CD4-positive, alpha-beta memory T cell (primary cell): ENCODE measurements at regions of chr14 and their contacts with region 1.

Region 1: DNA sequence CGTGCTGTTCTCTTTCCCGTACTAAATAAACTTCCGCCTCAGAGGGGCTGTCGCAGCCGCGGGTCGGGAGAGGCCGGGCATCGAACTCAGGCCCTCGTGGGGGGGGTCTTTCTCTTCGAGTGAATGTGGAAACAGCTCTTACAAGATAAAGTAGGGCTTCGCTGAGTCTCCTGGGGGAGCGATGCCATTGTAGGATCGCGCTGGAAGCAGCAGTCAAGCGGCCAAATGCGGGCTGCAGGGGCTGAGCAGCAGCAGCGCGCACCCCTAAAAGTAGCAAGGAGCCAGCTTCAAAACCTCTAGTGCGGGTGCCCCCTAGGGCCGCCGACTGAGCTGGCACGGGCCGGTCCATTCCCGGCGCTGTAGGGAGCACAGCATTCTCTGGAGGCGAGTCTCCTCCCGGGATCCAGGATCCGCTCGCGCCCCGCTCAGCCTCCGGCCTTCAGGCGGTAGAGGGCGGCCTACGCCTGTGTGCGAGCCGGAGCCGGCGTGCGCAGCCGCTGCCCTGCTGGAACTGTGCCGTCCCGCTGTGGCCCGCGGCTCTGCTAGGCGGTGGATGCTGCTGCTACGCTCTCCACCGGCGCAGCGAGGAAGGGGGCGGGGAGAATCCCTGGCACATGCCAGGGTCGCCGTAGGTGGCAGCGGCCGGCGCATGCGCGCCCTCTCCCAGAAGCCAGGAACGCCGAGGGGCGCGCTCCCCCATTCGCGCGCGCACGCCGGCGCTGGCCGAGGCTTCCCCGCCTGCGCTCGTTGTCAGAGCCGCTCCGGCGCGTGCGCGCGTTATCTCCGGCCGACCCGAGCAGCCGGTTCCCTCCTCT is at the start of gene FUT8:
- DNase-seq: peak; percentile 91 to 97 (median 95)
- H3K4me3 ChIP-seq: peak within 1 kb of the TSS; percentile 93 to 97
- H3K4me3 Mint-ChIP-seq: peak within 1 kb of the TSS; percentile 97 to 100 (median 99)
- H3K27ac ChIP-seq: peak within 1 kb of the TSS; percentile 79
- H3K27ac Mint-ChIP-seq: peak within 1 kb of the TSS; percentile 80 to 99 (median 98)
- H3K4me1 ChIP-seq: peaks cover 35% of the 10 kb centered on the region
- H3K4me1 Mint-ChIP-seq: peaks cover 27 to 45% (median 35%) of the 10 kb centered on the region in 4 donors
- H3K27me3 ChIP-seq: no peaks in the 10 kb centered on the region
- H3K27me3 Mint-ChIP-seq: no peaks in the 10 kb centered on the region
- total RNA-seq, gene FUT8: 49.3 to 51.0 TPM

Region 2: GRCh38 chr14:64986578-64987571 is 425.4 kb before region 1 on chr14 and contains the start of gene FNTB:
- CTCF ChIA-PET with region 1: interaction called, 5 read pairs
- POLR2A ChIA-PET with region 1: interaction called, 9 read pairs
- intact Hi-C with region 1: loop called (anchors 1 kb)
- DNase-seq: peak; percentile 93 to 96 (median 96)
- H3K4me3 ChIP-seq: peak within 1 kb of the TSS; percentile 57 to 98
- H3K4me3 Mint-ChIP-seq: peak within 1 kb of the TSS; percentile 92 to 100 (median 98)
- H3K27ac ChIP-seq: peak within 1 kb of the TSS; percentile 70
- H3K27ac Mint-ChIP-seq: peak within 1 kb of the TSS; percentile 89 to 100 (median 98)
- H3K4me1 ChIP-seq: peaks cover 48% of the 10 kb centered on the region
- H3K4me1 Mint-ChIP-seq: peaks cover 29 to 66% (median 45%) of the 10 kb centered on the region in 4 donors
- H3K27me3 ChIP-seq: no peaks in the 10 kb centered on the region
- H3K27me3 Mint-ChIP-seq: peaks cover 2 to 9% of the 10 kb centered on the region in 2 donors
- total RNA-seq, gene FNTB: 12.1 to 13.6 TPM

Region 3: GRCh38 chr14:65200454-65200853 is 211.8 kb before region 1 on chr14:
- CTCF ChIA-PET with region 1: interaction called, 3 read pairs
- POLR2A ChIA-PET with region 1: interaction called, 67 read pairs
- intact Hi-C with region 1: no loop called
- DNase-seq: no peak
- H3K4me3 ChIP-seq: no peak overlapping the region
- H3K4me3 Mint-ChIP-seq: no peak overlapping the region
- H3K27ac ChIP-seq: no peak overlapping the region
- H3K27ac Mint-ChIP-seq: peak overlapping the region in 1 of 7 donors; percentile 64
- H3K4me1 ChIP-seq: peaks cover 17% of the 10 kb centered on the region
- H3K4me1 Mint-ChIP-seq: peaks cover 13 to 25% (median 16%) of the 10 kb centered on the region in 4 donors
- H3K27me3 ChIP-seq: no peaks in the 10 kb centered on the region
- H3K27me3 Mint-ChIP-seq: no peaks in the 10 kb centered on the region

Region 4: DNA sequence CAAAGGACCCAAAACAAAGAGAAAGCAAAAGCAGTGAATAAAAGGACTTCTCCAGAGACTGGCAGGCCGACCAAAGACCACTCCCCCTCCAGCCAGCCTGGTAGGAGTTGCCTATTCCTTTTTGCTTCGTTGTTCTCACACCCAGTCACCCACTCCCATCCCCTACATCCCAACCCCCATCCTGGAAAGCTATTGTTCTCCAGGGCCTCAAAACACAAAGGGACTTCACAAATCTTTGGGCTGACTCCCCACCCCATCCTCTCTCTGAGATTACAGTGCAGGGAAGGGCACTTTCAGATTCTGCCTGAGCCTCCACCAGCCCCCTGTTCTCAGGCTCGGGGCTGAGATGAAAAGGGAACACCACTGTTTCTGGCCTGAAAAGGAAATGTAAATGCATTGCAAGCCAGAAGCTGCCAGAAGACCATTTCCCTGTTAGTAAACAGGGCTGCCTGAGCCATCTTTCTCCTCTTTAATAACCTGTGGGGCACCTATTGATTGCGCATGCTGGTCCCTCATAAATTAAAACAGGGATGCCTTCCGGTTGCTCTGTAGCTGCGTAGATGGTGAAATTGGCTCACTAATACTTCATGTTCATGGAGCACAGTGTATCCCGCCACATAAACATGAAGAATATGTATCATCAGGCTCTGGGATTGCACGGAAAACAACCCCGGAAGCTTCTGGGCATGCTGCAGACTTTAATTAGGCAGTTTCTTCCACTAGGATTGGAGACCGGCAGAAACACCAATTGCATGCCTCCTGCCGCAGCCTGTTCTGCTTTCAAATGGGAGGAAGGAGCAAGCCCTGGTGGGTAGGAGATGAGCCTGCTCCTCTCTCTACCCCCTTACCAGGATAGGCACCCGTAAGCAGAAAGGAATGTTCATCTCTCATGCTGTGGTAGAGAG is 130.0 kb before region 1 on chr14:
- CTCF ChIA-PET with region 1: interaction called, 11 read pairs
- POLR2A ChIA-PET with region 1: interaction called, 76 read pairs
- intact Hi-C with region 1: no loop called
- DNase-seq: peak in 4 of 5 donors; percentile 9 to 23 (median 18)
- H3K4me3 ChIP-seq: peak overlapping the region; percentile 25 to 30
- H3K4me3 Mint-ChIP-seq: peak overlapping the region; percentile 72 to 90 (median 84)
- H3K27ac ChIP-seq: peak overlapping the region; percentile 36
- H3K27ac Mint-ChIP-seq: peak overlapping the region; percentile 79 to 96 (median 94)
- H3K4me1 ChIP-seq: peaks cover 30% of the 10 kb centered on the region
- H3K4me1 Mint-ChIP-seq: peaks cover 26 to 48% (median 30%) of the 10 kb centered on the region in 4 donors
- H3K27me3 ChIP-seq: no peaks in the 10 kb centered on the region
- H3K27me3 Mint-ChIP-seq: no peaks in the 10 kb centered on the region

Region 5: GRCh38 chr14:65810322-65810721 is 398.1 kb after region 1 on chr14:
- CTCF ChIA-PET with region 1: interaction called, 10 read pairs
- POLR2A ChIA-PET with region 1: no interaction called
- intact Hi-C with region 1: no loop called
- DNase-seq: no peak
- H3K4me3 ChIP-seq: no peak overlapping the region
- H3K4me3 Mint-ChIP-seq: no peak overlapping the region
- H3K27ac ChIP-seq: no peak overlapping the region
- H3K27ac Mint-ChIP-seq: no peak overlapping the region
- H3K4me1 ChIP-seq: no peaks in the 10 kb centered on the region
- H3K4me1 Mint-ChIP-seq: peaks cover 0 to 5% (median 0%) of the 10 kb centered on the region in 4 donors
- H3K27me3 ChIP-seq: no peaks in the 10 kb centered on the region
- H3K27me3 Mint-ChIP-seq: no peaks in the 10 kb centered on the region

Region 6: DNA sequence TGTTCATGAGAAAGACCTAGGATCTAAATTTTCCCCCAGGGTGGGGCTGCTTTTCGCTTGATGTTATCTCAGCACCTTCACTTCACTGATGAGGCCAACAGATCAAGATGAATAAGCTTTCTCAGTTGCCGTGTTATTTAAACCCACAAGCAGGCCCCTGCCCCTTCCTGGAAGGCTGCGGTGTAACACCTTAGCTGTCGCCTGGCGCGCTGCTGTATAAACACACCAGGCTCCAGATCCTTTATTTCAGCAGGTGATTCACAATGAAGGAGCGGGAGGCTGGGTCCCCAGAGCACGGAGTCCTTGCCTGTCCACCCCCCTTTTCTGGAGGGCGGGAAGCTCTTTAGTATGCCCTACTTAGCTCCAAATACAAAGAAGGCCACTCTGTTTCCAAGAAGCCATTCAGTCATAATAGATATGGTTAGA is 515.7 kb after region 1 on chr14:
- CTCF ChIA-PET with region 1: interaction called, 6 read pairs
- POLR2A ChIA-PET with region 1: interaction called, 10 read pairs
- intact Hi-C with region 1: no loop called
- DNase-seq: peak; percentile 66 to 78 (median 73)
- H3K4me3 ChIP-seq: peak overlapping the region in 1 of 2 donors; percentile 22
- H3K4me3 Mint-ChIP-seq: peak overlapping the region; percentile 45 to 81 (median 73)
- H3K27ac ChIP-seq: peak overlapping the region; percentile 42
- H3K27ac Mint-ChIP-seq: peak overlapping the region; percentile 81 to 96 (median 92)
- H3K4me1 ChIP-seq: peaks cover 55% of the 10 kb centered on the region
- H3K4me1 Mint-ChIP-seq: peaks cover 52 to 72% (median 64%) of the 10 kb centered on the region in 4 donors
- H3K27me3 ChIP-seq: no peaks in the 10 kb centered on the region
- H3K27me3 Mint-ChIP-seq: no peaks in the 10 kb centered on the region